OCI-LY7 (cell line): ENCODE measurements at regions of chr14 and their contacts with region 1.

Region 1: GRCh38 chr14:75307700-75308379 is 29.2 kb downstream of the FOS start:
- DNase-seq: peak; percentile 86
- H3K4me3 ChIP-seq: no peak overlapping the region
- H3K27ac ChIP-seq: peak overlapping the region; percentile 19
- H3K4me1 ChIP-seq: peaks cover 31% of the 10 kb centered on the region
- CTCF ChIP-seq: peak; percentile 100

Region 2: GRCh38 chr14:74860906-74861733 is 446.7 kb before region 1 on chr14:
- CTCF ChIA-PET with region 1: no interaction called
- POLR2A ChIA-PET with region 1: no interaction called
- intact Hi-C with region 1: loop called (anchors 10 kb)
- DNase-seq: peak; percentile 90
- H3K4me3 ChIP-seq: no peak overlapping the region
- H3K27ac ChIP-seq: no peak overlapping the region
- H3K4me1 ChIP-seq: peaks cover 6% of the 10 kb centered on the region
- CTCF ChIP-seq: peak; percentile 96

Region 3: GRCh38 chr14:75063407-75064213 is 244.2 kb before region 1 on chr14 and contains the start of gene ACYP1:
- CTCF ChIA-PET with region 1: no interaction called
- POLR2A ChIA-PET with region 1: no interaction called
- intact Hi-C with region 1: loop called (anchors 10 kb)
- DNase-seq: peak; percentile 94
- H3K4me3 ChIP-seq: peak within 1 kb of the TSS; percentile 77
- H3K27ac ChIP-seq: peak within 1 kb of the TSS; percentile 41
- H3K4me1 ChIP-seq: peaks cover 23% of the 10 kb centered on the region
- CTCF ChIP-seq: no peak
- total RNA-seq, gene ACYP1: 97.5 and 121 TPM in 2 replicates

Region 4: DNA sequence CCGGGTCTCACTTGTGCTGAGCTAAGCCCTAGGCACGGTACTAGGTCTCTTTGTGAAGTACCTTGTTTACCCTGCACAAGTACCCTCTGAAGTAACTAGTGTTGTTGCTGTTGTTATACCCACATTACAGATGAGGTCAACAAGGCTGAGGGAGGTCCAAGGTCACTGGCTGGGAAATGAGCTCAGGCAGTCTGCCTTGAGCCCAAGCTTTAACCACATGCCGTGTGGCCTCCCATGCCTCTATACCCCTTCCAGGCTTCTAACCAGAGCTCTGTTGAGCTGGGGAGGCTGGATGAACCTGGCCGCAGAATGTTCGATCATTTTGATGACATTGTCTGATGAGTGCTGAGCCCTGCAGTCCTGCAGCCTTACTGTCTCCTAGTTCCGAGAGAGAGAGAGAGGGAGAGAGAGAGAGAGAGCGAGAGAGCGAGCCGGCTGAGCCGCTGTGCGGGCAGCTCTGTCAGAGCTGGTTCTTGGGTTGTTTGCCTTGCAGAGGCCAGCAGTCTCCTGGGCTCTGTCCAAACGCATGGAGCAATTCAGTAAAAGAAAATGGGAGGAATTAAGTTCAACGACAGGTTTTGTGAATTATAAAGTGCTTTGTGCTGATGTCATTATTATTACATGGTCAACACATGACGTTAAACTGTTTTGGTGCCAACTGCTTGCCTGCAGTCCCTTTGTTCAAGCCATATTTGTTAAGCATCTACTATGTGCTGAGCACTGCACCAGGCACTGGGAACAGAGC is 133.1 kb after region 1 on chr14:
- CTCF ChIA-PET with region 1: no interaction called
- POLR2A ChIA-PET with region 1: interaction called, 3 read pairs
- intact Hi-C with region 1: loop called (anchors 5 kb)
- DNase-seq: peak; percentile 51
- H3K4me3 ChIP-seq: peak overlapping the region; percentile 64
- H3K27ac ChIP-seq: peak overlapping the region; percentile 84
- H3K4me1 ChIP-seq: peaks cover 93% of the 10 kb centered on the region
- CTCF ChIP-seq: no peak

Region 5: GRCh38 chr14:75487155-75487671 is 179.4 kb after region 1 on chr14:
- CTCF ChIA-PET with region 1: interaction called, 6 read pairs
- POLR2A ChIA-PET with region 1: interaction called, 6 read pairs
- intact Hi-C with region 1: loop called (anchors 1 kb)
- DNase-seq: peak; percentile 91
- H3K4me3 ChIP-seq: peak overlapping the region; percentile 18
- H3K27ac ChIP-seq: peak overlapping the region; percentile 81
- H3K4me1 ChIP-seq: peaks cover 37% of the 10 kb centered on the region
- CTCF ChIP-seq: no peak

Region 6: GRCh38 chr14:75654127-75654732 is 346.4 kb after region 1 on chr14:
- CTCF ChIA-PET with region 1: no interaction called
- POLR2A ChIA-PET with region 1: no interaction called
- intact Hi-C with region 1: loop called (anchors 5 kb)
- DNase-seq: peak; percentile 72
- H3K4me3 ChIP-seq: no peak overlapping the region
- H3K27ac ChIP-seq: no peak overlapping the region
- H3K4me1 ChIP-seq: no peaks in the 10 kb centered on the region
- CTCF ChIP-seq: peak; percentile 98